ENCODE measurements at regions of chr3 and their contacts with region 1.

Region 1: GRCh38 chr3:42780892-42781700 is 8.0 kb upstream of the CCDC13 start:
- DNase-seq: peak in 1 of 3 donors; percentile 77
- ATAC-seq: peak; percentile 69
- H3K4me3 ChIP-seq: no peak overlapping the region
- H3K4me1 ChIP-seq: peaks cover 10% of the 10 kb centered on the region
- CTCF ChIP-seq: peak; percentile 35

Region 2: DNA sequence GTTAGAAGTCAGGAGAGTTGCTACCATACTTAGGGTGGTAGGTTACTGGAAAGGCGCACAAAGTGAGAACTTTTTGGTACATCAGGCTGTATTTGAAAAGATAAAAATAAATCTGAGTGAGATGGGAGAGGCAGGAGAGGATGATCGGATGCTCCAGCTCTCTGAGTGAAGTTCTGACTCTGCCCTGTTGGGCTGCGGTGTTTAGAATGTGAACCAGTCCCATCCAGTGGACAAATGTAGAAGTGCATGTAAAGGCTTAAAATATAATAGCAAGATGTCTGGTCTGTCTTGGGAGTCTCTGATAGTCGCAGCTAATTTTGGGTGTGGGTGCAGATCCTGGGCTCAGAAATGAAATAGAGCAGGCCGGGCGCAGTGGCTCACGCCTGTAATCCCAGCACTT is 58.5 kb after region 1 on chr3:
- intact Hi-C with region 1: loop called (anchors 5 to 10 kb)
- DNase-seq: peak in 1 of 3 donors; percentile 76
- ATAC-seq: peak; percentile 90
- H3K4me3 ChIP-seq: no peak overlapping the region
- H3K4me1 ChIP-seq: no peaks in the 10 kb centered on the region
- CTCF ChIP-seq: peak; percentile 49